Heart left ventricle (tissue), 16 donors: ENCODE measurements at regions of chr18 and their contacts with region 1.

Region 1: DNA sequence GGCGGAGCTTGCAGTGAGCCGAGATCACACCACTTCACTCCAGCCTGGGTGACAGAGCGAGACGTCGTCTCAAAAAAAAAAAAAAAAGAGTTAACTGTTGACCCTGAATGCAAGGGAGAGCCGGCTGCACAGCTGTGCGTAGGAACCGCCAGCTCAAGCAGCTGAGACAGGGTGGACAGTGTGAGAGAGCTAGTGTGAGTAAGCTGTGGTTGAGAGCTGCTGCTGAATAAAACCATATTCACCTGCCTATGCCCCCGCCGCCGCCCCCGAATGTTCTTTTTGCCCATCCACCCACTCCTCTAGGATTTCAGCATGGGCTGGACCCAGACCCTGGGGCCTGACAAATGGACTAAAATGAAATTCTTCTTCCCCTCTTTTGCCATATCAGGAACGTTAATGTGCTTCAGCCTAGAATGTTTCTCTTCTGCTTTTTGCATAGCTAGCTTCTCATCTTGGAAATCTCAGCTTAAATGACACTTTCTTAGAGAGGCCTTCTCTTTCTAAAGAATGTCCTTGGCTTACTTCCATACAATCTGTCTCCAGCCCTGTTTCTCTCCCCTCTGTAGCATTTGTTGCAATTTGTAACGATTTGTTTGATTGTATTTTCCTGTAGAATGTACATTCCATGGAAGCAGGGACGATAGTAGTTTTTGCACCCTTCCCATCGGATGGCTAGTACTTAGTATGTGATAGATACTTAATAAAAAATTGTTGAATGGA is 142.7 kb downstream of the KLHL14 start:
- DNase-seq: peak in 1 of 5 donors; percentile 27
- ATAC-seq: peak in 1 of 4 donors; percentile 65
- H3K4me3 ChIP-seq: no peak overlapping the region
- H3K27ac ChIP-seq: no peak overlapping the region
- H3K4me1 ChIP-seq: no peaks in the 10 kb centered on the region
- H3K27me3 ChIP-seq: peaks cover 0 to 3% (median 0%) of the 10 kb centered on the region in 9 donors
- CTCF ChIP-seq: no peak
- POLR2A ChIP-seq: no peak

Region 2: DNA sequence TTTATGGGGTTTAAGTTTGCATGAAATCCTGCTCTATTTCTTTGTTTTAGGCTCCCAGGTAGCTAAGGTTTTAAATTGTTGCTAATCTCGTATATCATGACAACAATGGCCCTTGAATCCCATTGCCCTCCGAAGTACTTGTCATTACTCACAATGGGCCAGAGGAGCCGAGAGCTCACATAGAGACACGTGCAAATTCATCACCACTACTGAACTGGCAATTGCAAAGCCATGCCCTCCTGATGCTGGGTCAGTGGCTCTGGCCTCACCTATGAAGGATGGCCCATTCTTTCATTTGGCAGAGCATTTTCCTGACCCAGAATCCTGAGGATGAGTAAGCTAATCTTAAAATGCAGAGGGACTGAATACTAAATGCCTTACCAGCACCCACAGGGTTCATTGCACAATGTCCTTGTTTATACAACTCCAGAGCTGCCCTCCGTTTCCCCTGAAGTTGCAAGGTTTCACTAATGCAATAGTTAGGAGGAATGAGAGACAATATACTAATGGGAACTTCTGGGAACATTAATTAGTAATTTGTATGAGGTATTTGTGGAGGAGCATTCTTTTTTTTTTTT is 87.8 kb before region 1 on chr18:
- intact Hi-C with region 1: no loop called
- DNase-seq: no peak
- ATAC-seq: no peak
- H3K4me3 ChIP-seq: no peak overlapping the region
- H3K27ac ChIP-seq: no peak overlapping the region
- H3K4me1 ChIP-seq: no peaks in the 10 kb centered on the region
- H3K27me3 ChIP-seq: peaks cover 0 to 6% (median 0%) of the 10 kb centered on the region in 9 donors
- CTCF ChIP-seq: no peak
- POLR2A ChIP-seq: no peak

Region 3: DNA sequence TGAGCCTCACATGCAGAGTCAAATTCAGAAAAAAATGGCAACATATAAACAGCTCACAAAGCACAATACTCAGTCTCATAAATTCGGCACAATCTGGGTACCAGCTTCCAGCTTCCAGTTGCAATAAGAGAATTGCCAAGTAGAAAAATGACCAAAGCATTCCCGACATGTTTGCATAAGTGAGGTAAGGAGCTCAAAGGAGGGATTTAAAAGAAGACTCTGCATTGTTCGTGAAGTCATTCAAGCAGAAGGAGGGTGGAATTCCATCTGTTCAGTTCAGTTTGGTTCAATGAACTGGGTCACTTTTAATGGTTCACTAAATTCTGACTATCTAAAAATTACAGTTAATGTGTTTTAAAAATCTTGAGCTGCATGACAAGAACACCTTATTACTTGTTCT is 249.4 kb after region 1 on chr18:
- intact Hi-C with region 1: loop called in 1 of 10 experiments (anchors 5 kb)
- DNase-seq: no peak
- ATAC-seq: no peak
- H3K4me3 ChIP-seq: no peak overlapping the region
- H3K27ac ChIP-seq: no peak overlapping the region
- H3K4me1 ChIP-seq: no peaks in the 10 kb centered on the region
- H3K27me3 ChIP-seq: no peaks in the 10 kb centered on the region
- CTCF ChIP-seq: no peak
- POLR2A ChIP-seq: no peak